ENCODE measurements at regions of chr3 and their contacts with region 1.

Region 1: GRCh38 chr3:117719316-117719926 is 1009.8 kb downstream of the TUSC7 start:
- DNase-seq: no peak
- H3K4me3 ChIP-seq: no peak overlapping the region
- H3K27me3 ChIP-seq: no peaks in the 10 kb centered on the region
- CTCF ChIP-seq: peak; percentile 80

Region 2: DNA sequence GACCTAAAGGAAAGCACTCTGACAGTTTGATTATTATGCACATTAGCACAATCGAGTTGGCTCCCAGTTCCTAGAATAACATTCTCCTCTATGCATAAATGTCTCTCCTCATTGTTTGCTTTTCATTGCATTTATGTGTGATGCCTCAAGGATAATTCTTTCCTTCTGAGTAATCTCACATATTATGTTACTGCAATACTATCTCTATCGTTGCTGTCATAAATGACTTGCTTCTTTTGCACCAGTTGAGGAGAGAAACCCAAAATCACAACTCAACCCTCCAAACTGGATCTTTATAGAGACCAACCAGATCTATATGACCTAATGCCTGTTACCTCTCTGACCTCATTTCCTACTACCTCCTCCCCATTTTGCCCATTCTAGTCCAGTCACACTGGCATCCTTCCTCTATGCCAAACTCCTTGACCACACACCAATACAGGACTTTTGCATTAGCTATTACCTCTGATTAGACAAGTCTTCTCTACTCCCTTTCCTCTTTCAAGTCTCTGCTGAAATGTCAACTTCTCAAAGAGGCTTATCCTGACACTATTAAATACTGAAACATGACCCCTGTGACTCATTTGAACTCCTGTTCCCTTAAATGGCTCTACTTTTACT is 16.2 kb after region 1 on chr3:
- CTCF ChIA-PET with region 1: interaction called, 11 read pairs
- POLR2A ChIA-PET with region 1: no interaction called
- DNase-seq: peak; percentile 77
- H3K4me3 ChIP-seq: no peak overlapping the region
- H3K27me3 ChIP-seq: no peaks in the 10 kb centered on the region
- CTCF ChIP-seq: no peak

Region 3: GRCh38 chr3:117790235-117790987 is 71.0 kb after region 1 on chr3:
- CTCF ChIA-PET with region 1: no interaction called
- POLR2A ChIA-PET with region 1: no interaction called
- DNase-seq: no peak
- H3K4me3 ChIP-seq: no peak overlapping the region
- H3K27me3 ChIP-seq: no peaks in the 10 kb centered on the region
- CTCF ChIP-seq: no peak

Region 4: DNA sequence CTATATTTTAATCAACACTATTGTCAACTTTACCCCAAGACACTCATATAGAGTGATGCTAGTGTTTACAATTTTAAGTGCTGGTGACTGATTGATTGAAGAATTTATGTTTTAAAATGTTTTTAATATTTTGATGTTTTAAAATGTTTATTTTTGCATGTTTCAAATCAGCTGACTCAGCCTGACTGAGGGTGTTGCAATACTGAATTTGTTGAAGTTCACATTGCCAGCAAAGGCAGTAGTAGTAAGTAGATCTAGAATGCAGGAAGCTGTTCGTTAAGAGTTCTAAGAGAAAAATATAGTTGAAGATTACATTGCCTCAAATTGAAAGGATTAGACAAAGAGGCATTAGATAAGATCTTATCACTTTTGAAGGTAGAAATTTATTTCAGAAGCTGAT is 337.7 kb after region 1 on chr3:
- CTCF ChIA-PET with region 1: no interaction called
- POLR2A ChIA-PET with region 1: no interaction called
- DNase-seq: no peak
- H3K4me3 ChIP-seq: no peak overlapping the region
- H3K27me3 ChIP-seq: no peaks in the 10 kb centered on the region
- CTCF ChIP-seq: no peak